CD4-positive, alpha-beta memory T cell (primary cell): ENCODE measurements at regions of chr1 and their contacts with region 1.

Region 1: GRCh38 chr1:53367503-53368304 is 39.8 kb upstream of the LRP8 start:
- DNase-seq: peak; percentile 27 to 57 (median 41)
- H3K4me3 ChIP-seq: peak overlapping the region in 1 of 2 donors; percentile 39
- H3K4me3 Mint-ChIP-seq: peak overlapping the region; percentile 87 to 96 (median 91)
- H3K27ac ChIP-seq: peak overlapping the region; percentile 10
- H3K27ac Mint-ChIP-seq: peak overlapping the region; percentile 61 to 98 (median 93)
- H3K4me1 ChIP-seq: peaks cover 28% of the 10 kb centered on the region
- H3K4me1 Mint-ChIP-seq: peaks cover 11 to 31% (median 22%) of the 10 kb centered on the region in 4 donors
- H3K27me3 ChIP-seq: no peaks in the 10 kb centered on the region
- H3K27me3 Mint-ChIP-seq: no peaks in the 10 kb centered on the region

Region 2: DNA sequence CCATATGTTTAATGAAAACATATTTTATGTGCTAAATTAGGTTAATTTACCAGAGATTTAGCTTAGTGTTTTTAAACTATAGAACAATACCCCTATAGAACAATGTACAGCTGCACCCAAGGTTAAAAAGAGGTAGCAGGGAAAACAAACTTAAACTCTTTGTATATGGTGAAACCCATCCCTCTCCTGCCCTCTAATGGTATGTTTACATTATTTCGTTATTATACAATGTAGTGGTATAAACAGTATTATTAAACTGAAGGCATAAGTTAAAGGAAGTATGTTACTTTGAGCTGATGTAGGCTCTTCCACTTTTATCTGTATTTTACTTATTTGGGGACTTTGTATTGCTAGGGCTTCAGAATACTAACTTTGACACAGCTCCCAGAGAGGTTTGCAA is 541.8 kb before region 1 on chr1:
- CTCF ChIA-PET with region 1: no interaction called
- POLR2A ChIA-PET with region 1: no interaction called
- intact Hi-C with region 1: no loop called
- DNase-seq: no peak
- H3K4me3 ChIP-seq: no peak overlapping the region
- H3K4me3 Mint-ChIP-seq: no peak overlapping the region
- H3K27ac ChIP-seq: no peak overlapping the region
- H3K27ac Mint-ChIP-seq: peak overlapping the region in 1 of 7 donors; percentile 23
- H3K4me1 ChIP-seq: no peaks in the 10 kb centered on the region
- H3K4me1 Mint-ChIP-seq: no peaks in the 10 kb centered on the region
- H3K27me3 ChIP-seq: no peaks in the 10 kb centered on the region
- H3K27me3 Mint-ChIP-seq: no peaks in the 10 kb centered on the region

Region 3: DNA sequence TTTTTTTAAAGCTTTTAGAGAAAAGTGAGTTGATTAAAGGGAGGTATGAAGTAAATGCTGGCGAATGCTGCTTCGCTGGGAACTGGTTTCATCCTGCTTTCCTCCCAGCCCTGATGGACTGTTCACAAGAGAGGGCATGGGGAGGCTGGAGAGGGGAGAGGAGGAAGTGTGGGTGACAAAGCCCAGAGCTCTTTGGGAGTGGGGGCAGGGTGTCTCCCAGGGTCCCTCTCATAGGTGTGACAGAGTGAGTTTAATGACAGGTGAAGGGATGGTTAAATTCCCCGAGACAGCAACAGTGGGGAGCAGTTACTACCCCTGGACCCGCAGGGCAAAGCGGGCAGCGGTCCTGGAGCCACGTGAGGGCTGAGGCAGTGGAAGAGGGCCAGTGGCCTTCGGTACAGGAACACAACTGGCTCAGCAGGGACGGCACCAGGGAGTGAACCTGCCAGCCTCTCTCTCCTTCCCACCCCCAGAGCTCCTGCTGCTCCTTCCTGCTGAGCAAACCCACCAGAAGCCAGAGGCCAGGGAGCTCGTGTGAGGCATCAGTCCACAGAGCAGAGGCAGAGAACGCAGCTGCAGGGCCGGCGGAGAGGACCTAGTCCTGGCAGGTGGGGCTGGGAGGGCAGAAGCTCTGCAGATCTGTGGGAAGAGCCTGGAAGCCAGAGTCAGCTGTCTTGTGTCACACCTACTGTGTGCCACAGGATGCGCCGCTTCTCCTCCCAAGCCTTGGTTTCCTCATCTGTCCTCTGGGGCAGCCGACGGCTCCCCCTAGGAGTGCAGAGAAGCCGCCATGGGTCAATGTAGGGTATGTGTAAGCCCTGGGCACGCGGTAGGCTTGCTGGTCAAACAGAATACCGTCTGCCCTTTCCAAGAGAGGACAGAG is 19.0 kb before region 1 on chr1:
- CTCF ChIA-PET with region 1: no interaction called
- POLR2A ChIA-PET with region 1: no interaction called
- intact Hi-C with region 1: loop called (anchors 1 kb)
- DNase-seq: no peak
- H3K4me3 ChIP-seq: no peak overlapping the region
- H3K4me3 Mint-ChIP-seq: no peak overlapping the region
- H3K27ac ChIP-seq: no peak overlapping the region
- H3K27ac Mint-ChIP-seq: no peak overlapping the region
- H3K4me1 ChIP-seq: no peaks in the 10 kb centered on the region
- H3K4me1 Mint-ChIP-seq: peaks cover 0 to 2% (median under 1%) of the 10 kb centered on the region in 4 donors
- H3K27me3 ChIP-seq: no peaks in the 10 kb centered on the region
- H3K27me3 Mint-ChIP-seq: no peaks in the 10 kb centered on the region